Spleen (tissue), 13 donors: ENCODE measurements at regions of chr15 and their contacts with region 1.

Region 1: DNA sequence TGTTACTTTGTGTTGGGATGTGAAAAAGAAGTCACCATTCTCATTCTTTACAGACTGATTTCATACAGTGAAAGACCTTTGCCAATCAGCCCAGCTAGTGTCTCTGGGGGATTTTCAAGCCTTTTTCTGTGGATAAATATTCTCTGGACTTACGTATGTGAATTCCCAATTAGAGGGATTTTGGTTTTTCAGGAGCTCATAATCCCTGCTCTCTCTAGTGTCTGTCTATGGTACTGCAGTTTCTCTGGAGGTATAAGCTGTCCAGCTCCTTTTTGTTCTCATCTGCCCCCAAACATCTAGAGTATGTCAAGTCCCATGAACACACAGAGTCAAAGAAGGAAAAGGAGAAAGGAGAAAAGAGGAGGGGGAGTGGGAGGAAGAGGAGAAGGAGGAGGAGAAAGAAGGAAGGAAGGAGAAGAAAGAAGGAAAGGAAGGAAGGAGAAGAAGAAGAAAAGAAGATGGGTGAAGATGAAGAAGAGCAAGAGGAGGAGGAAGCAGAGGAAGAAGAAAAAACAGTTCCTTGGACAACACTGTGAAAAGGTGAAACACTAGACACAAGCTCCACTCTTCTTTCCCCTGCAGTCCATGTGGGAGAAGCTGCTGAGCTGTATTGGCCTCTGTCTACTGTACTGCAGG is 218.6 kb downstream of the GREM1 start:
- DNase-seq: no peak
- H3K4me3 ChIP-seq: no peak overlapping the region
- H3K27ac ChIP-seq: no peak overlapping the region
- H3K4me1 ChIP-seq: no peaks in the 10 kb centered on the region
- H3K27me3 ChIP-seq: peaks cover 0 to 16% (median 0%) of the 10 kb centered on the region in 7 donors
- CTCF ChIP-seq: peak; percentile 9 to 68 (median 55)
- POLR2A ChIP-seq: no peak

Region 2: GRCh38 chr15:32844118-32844711 is 92.2 kb before region 1 on chr15:
- intact Hi-C with region 1: loop called (anchors 10 kb)
- DNase-seq: no peak
- H3K4me3 ChIP-seq: no peak overlapping the region
- H3K27ac ChIP-seq: no peak overlapping the region
- H3K4me1 ChIP-seq: no peaks in the 10 kb centered on the region
- H3K27me3 ChIP-seq: no peaks in the 10 kb centered on the region
- CTCF ChIP-seq: peak in 10 of 11 experiments; percentile 36 to 72 (median 64)
- POLR2A ChIP-seq: no peak